ENCODE measurements at regions of chr20 and their contacts with region 1.

Region 1: GRCh38 chr20:47379433-47380150 is 23.1 kb upstream of the ZMYND8 start:
- DNase-seq: no peak
- H3K4me3 Mint-ChIP-seq: no peak overlapping the region
- H3K27ac Mint-ChIP-seq: no peak overlapping the region
- H3K4me1 Mint-ChIP-seq: peaks cover 18% of the 10 kb centered on the region
- H3K27me3 Mint-ChIP-seq: no peaks in the 10 kb centered on the region

Region 2: DNA sequence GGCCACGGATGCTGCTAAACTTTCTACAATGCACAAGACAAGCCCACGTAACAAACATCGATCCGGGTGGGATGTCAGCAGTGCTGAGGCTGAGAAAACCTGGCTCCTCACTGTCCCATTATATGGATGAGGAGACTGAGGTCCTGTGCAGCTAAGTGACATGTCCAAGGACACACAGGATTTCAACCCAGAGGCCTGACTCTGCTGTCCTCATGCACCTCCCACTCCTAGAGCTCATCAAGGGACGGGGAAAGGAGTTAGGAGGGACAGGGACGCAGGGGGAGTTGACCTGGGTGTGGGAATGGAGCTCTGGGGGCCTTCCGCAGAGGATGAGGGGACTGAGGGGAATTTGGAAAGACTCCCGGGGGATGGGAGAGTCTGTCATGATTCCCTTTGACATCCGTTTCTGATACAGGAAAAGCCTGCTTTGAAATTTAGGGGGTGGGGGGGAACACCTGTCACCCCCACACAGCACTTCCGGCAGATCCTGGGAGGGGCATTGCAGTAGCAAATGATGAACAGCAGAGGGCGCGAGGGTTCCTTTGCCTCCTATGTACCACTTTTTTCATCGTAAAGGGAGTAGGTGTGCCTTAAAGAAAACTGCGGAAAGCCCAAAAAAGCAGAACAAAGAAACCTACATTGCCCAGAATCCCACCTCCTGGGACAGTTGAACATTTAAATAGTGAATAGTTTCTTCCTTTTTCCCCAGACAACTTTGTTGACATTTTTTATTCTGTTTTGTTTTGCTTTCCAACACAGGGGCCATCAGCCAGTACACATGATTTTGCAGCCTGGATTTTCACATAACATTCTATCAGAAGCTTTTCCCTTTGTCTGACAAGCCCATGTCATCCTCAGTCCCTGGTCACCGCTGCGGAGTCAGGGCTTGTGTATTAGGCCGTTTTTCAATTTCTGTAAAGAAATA is 621.6 kb before region 1 on chr20:
- CTCF ChIA-PET with region 1: interaction called, 9 read pairs
- POLR2A ChIA-PET with region 1: no interaction called
- intact Hi-C with region 1: loop called (anchors 5 kb)
- DNase-seq: peak; percentile 73
- H3K4me3 Mint-ChIP-seq: no peak overlapping the region
- H3K27ac Mint-ChIP-seq: no peak overlapping the region
- H3K4me1 Mint-ChIP-seq: no peaks in the 10 kb centered on the region
- H3K27me3 Mint-ChIP-seq: peaks cover 8% of the 10 kb centered on the region

Region 3: GRCh38 chr20:47228654-47229053 is 150.9 kb before region 1 on chr20:
- CTCF ChIA-PET with region 1: interaction called, 122 read pairs
- POLR2A ChIA-PET with region 1: no interaction called
- intact Hi-C with region 1: no loop called
- DNase-seq: no peak
- H3K4me3 Mint-ChIP-seq: no peak overlapping the region
- H3K27ac Mint-ChIP-seq: no peak overlapping the region
- H3K4me1 Mint-ChIP-seq: peaks cover 2% of the 10 kb centered on the region
- H3K27me3 Mint-ChIP-seq: no peaks in the 10 kb centered on the region

Region 4: GRCh38 chr20:47258745-47259695 is 120.6 kb before region 1 on chr20:
- CTCF ChIA-PET with region 1: interaction called, 13 read pairs
- POLR2A ChIA-PET with region 1: no interaction called
- intact Hi-C with region 1: no loop called
- DNase-seq: no peak
- H3K4me3 Mint-ChIP-seq: no peak overlapping the region
- H3K27ac Mint-ChIP-seq: peak overlapping the region; percentile 21
- H3K4me1 Mint-ChIP-seq: peaks cover 13% of the 10 kb centered on the region
- H3K27me3 Mint-ChIP-seq: no peaks in the 10 kb centered on the region

Region 5: DNA sequence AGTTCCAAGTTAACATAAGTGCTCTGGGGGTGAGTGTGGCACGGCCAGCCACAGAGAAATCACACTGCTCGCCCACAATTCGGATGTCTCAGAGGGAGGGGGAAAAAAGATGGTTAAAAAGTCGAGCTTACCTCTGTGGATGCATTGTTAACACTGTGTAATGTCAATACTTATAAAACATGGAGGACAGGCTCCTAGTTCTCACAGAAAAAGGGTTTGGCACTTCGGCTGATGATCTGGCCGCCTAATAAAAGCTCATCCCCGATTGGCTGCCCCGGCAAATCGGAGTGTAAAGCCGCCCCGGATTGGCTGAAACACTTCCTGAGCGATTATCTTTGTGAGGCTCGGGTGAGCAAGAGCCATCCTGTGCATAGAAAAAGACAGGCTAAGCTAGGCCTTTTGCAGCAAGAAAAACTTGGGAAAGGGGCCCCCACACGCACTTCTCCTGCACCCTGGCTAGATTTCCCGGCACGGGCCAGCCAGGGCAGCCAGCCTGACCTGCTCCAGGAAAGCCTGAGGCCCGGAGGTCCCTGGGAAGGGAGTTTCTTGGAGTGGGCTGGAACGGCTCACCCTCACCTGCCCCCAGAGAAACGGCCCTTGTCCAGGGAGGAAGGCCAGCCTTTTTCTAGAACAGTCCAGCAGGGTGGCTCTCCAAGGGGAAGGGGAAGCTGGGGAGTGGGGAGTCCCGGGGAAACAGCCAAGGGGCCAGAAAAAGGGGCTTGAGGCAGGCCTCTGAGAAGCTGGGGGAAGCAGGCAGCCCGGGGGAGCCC is 22.9 kb before region 1 on chr20 and contains the start of gene ZMYND8:
- CTCF ChIA-PET with region 1: interaction called, 67 read pairs
- POLR2A ChIA-PET with region 1: interaction called, 5 read pairs
- intact Hi-C with region 1: no loop called
- DNase-seq: peak; percentile 99
- H3K4me3 Mint-ChIP-seq: peak within 1 kb of the TSS; percentile 96
- H3K27ac Mint-ChIP-seq: peak within 1 kb of the TSS; percentile 98
- H3K4me1 Mint-ChIP-seq: peaks cover 35% of the 10 kb centered on the region
- H3K27me3 Mint-ChIP-seq: no peaks in the 10 kb centered on the region
- total RNA-seq, gene ZMYND8: 28.1 to 29.6 TPM

Region 6: DNA sequence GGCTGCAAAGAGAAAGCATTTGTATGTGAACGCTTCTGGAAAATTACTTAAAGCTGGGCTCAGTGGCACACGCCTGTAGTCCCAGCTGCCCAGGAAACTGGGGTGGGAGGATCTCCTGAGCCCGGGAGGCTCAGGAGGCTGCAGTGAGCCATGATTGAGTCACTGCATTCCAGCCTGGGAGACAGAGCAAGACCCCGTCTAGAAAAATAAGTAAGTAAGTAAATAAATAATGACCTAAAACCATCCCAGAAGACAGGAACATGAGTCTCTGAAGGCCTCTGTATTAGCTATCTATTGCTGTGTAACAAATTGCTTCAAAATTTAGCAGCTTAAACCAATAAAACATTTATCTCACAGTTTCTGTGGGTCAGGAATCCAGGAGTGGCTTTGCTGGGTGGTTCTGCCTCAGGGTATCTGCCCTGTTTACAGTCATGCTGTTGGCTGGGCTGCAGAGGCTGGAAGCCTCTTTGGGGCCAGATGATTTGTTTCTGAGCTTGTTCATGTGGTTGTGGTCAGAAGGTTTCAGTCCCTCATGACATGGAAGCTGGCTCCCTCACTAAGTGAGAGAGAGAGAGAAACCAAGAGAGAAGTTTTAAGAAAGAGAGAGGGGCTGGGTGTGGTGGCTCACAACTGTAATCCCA is 73.7 kb after region 1 on chr20:
- CTCF ChIA-PET with region 1: interaction called, 20 read pairs
- POLR2A ChIA-PET with region 1: no interaction called
- intact Hi-C with region 1: no loop called
- DNase-seq: peak; percentile 77
- H3K4me3 Mint-ChIP-seq: no peak overlapping the region
- H3K27ac Mint-ChIP-seq: peak overlapping the region; percentile 74
- H3K4me1 Mint-ChIP-seq: peaks cover 35% of the 10 kb centered on the region
- H3K27me3 Mint-ChIP-seq: no peaks in the 10 kb centered on the region

Region 7: DNA sequence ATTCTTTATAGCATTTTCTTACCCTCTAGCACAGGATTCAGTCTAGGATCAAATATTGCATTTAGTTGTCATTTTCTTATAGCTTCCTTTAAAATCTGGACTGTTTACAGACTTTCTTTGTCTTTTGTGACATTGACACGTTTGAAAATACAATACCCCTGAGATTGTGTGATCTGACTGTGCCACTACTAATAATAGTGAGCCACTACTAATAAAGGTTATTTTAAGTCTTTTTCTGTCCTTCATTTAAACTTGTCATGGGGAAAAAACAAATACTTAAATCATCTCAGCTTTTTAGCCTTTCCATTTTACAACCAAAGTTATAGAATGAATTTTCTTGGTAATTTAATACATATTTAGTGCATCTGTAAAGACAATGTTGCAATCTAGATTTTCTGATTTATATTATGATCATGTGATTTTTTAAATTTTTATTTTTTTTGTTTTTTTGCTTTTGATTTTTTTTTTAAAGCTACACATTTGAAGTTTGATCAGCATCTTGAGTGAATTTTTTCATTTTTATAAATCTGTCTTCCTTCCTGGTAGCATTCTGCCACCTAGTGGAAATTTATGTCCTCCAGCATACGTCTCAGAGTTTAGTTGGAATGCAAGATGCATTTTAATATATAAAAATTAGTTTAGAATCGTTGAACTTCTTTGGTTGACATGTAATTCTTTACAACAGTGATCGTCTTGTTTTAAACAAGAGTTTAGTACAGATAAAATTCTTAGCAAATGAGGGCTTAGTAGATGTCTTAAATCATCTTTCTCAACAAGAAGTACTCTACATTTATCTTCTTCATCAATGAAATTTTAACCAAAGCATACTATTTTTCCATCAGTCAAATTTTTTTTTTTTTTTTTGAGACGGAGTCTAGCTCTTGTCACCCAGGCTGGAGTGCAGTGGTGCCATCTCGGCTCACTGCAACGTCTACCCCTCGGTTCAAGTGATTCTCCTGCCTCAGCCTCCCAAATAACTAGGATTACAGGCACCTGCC is 241.5 kb after region 1 on chr20:
- CTCF ChIA-PET with region 1: interaction called, 50 read pairs
- POLR2A ChIA-PET with region 1: no interaction called
- intact Hi-C with region 1: loop called (anchors 2 kb)
- DNase-seq: no peak
- H3K4me3 Mint-ChIP-seq: no peak overlapping the region
- H3K27ac Mint-ChIP-seq: peak overlapping the region; percentile 11
- H3K4me1 Mint-ChIP-seq: peaks cover 33% of the 10 kb centered on the region
- H3K27me3 Mint-ChIP-seq: no peaks in the 10 kb centered on the region

Measured in activated CD4-positive, alpha-beta memory T cell treated with anti-CD3 and anti-CD28 coated beads for 36 hours (primary cell).